T-cell (primary cell): ENCODE measurements at regions of chr11 and their contacts with region 1.

Region 1: DNA sequence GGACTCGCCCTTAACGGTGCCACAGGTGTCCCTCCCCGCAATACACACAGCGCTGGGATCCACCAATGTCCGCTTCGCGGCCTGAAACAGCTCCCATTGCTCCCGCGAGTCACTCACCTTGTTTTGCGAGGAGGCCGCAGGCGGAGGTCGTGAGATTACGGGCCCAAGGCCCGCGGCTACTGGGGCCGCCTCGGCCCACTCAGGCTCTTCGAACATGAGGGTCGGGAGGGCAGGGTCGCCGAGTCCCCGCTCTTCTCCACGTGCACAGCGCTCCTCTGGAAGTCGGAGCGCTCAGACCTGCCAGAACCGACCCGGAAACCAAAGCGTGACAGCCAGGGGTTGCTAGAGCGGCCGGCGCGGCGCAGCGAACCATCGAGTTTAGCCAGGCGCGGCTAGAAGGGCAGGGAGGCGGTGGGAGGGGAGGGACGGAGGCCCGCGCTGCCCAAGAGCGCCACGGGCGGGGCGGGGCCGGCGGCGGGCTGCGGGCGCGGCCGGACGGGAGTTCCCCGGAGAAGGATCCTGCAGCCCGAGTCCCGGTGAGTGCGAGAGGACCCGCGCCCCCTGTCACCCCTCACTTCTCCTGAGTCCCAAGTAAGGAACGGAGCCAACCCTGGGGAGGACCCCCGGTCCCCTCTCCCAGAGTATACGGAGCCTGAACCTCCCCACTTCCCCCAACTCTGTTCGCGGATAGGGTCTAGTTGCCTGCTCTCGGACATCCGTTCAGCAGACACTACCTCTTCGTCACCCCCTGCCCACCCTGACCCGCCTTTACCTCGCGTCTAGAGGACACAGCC is at the starts of genes ILK and RRP8:
- DNase-seq: peak; percentile 66 to 90 (median 74)
- ATAC-seq: peak; percentile 84 to 90 (median 88)
- H3K4me3 ChIP-seq: peak within 1 kb of the TSS; percentile 81 to 96
- H3K4me3 Mint-ChIP-seq: no peak within 1 kb of the TSS
- H3K27ac ChIP-seq: peak within 1 kb of the TSS; percentile 72
- H3K27ac Mint-ChIP-seq: no peak within 1 kb of the TSS
- H3K4me1 ChIP-seq: peaks cover 38 to 66% of the 10 kb centered on the region in 2 experiments
- H3K4me1 Mint-ChIP-seq: peaks cover 13 to 25% (median 21%) of the 10 kb centered on the region in 3 donors
- H3K27me3 ChIP-seq: no peaks in the 10 kb centered on the region
- H3K27me3 Mint-ChIP-seq: no peaks in the 10 kb centered on the region
- total RNA-seq, gene ILK: 49.3 to 111 (median 99.4) TPM
- total RNA-seq, gene RRP8: 24.5 to 35.5 (median 32.2) TPM

Region 2: DNA sequence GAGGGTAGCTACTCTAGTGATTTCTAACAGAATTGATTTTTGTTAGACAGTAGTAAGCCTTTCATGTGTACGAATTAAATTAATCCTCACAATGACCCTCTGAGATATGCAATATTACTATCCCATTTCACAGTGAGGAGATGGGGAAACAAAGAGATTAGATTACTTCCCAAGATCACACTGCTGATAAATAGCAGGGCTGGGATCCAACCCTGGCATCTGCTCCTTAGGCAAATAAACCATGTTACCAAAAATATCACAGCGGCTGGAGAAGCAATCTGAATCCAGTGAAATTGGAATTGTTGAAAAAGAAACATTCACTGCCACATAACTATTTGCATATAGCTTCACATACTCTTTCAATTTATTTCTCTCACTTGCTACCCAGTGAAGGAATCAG is 270.4 kb before region 1 on chr11:
- CTCF ChIA-PET with region 1: no interaction called
- POLR2A ChIA-PET with region 1: no interaction called
- DNase-seq: no peak
- ATAC-seq: no peak
- H3K4me3 ChIP-seq: no peak overlapping the region
- H3K4me3 Mint-ChIP-seq: no peak overlapping the region
- H3K27ac ChIP-seq: no peak overlapping the region
- H3K27ac Mint-ChIP-seq: no peak overlapping the region
- H3K4me1 ChIP-seq: no peaks in the 10 kb centered on the region
- H3K4me1 Mint-ChIP-seq: no peaks in the 10 kb centered on the region
- H3K27me3 ChIP-seq: peaks cover 6 to 10% of the 10 kb centered on the region in 2 experiments
- H3K27me3 Mint-ChIP-seq: peaks cover 8 to 12% of the 10 kb centered on the region in 2 donors

Region 3: DNA sequence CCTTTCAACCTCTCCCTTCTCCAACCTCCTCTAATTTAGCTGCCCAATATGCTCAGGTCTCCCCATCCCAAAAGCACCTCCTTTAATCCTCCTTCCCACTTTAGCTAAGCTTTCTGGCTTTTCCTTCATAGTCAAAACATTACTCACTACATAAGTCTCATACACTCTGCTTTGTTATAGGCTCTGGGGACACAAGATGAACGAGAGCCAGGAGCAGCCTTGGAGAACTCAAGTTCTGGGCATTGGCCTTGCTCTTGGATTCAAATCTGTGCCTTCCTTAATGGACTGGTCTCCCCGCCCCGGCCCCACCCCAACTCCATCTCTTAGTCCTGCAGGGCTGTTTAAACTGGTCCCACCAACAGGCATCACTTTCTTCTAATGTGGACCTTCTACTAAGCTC is 151.3 kb before region 1 on chr11:
- CTCF ChIA-PET with region 1: no interaction called
- POLR2A ChIA-PET with region 1: no interaction called
- DNase-seq: no peak
- ATAC-seq: no peak
- H3K4me3 ChIP-seq: no peak overlapping the region
- H3K4me3 Mint-ChIP-seq: no peak overlapping the region
- H3K27ac ChIP-seq: no peak overlapping the region
- H3K27ac Mint-ChIP-seq: no peak overlapping the region
- H3K4me1 ChIP-seq: no peaks in the 10 kb centered on the region
- H3K4me1 Mint-ChIP-seq: no peaks in the 10 kb centered on the region
- H3K27me3 ChIP-seq: no peaks in the 10 kb centered on the region
- H3K27me3 Mint-ChIP-seq: no peaks in the 10 kb centered on the region

Region 4: GRCh38 chr11:6579681-6580080 is 23.8 kb before region 1 on chr11:
- CTCF ChIA-PET with region 1: no interaction called
- POLR2A ChIA-PET with region 1: no interaction called
- DNase-seq: no peak
- ATAC-seq: no peak
- H3K4me3 ChIP-seq: no peak overlapping the region
- H3K4me3 Mint-ChIP-seq: no peak overlapping the region
- H3K27ac ChIP-seq: no peak overlapping the region
- H3K27ac Mint-ChIP-seq: no peak overlapping the region
- H3K4me1 ChIP-seq: no peaks in the 10 kb centered on the region
- H3K4me1 Mint-ChIP-seq: peaks cover 0 to 7% (median 0%) of the 10 kb centered on the region in 3 donors
- H3K27me3 ChIP-seq: no peaks in the 10 kb centered on the region
- H3K27me3 Mint-ChIP-seq: no peaks in the 10 kb centered on the region

Region 5: DNA sequence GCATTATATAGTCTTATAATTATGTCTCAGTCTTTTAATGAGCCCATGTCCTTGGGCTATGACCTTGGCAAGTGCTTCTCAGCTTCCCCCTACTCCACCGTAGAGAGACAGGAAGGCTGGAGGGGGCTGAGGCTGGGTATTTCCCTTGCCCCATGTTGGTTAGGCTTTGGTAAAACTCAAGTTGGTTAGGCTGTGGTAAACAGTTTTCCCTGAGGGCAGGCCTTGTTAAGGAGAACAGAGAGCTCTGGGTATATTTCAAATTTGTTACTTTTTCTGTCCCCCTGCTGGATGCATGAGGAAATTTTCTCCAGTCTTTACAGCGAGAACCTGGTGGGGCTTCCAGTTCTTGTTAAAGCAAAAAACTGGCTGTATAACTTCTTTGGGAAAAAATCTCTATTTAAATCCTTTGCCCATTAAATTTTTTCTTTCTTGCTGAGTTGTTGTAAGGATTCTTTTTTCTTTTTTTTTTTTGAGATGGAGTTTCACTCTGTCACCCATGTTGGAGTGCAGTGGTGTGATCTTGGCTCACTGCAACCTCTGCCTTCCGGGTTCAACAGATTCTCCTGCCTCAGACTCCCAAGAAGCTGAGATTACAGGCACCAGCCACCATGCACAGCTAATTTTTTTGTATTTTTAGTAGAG is 64.4 kb after region 1 on chr11:
- CTCF ChIA-PET with region 1: interaction called in 1 of 2 experiments, 13 read pairs
- POLR2A ChIA-PET with region 1: interaction called in 1 of 2 experiments, 4 read pairs
- DNase-seq: peak in 11 of 35 experiments; percentile 12 to 72 (median 26)
- ATAC-seq: peak; percentile 60 to 84 (median 68)
- H3K4me3 ChIP-seq: no peak overlapping the region
- H3K4me3 Mint-ChIP-seq: no peak overlapping the region
- H3K27ac ChIP-seq: peak overlapping the region; percentile 46
- H3K27ac Mint-ChIP-seq: peak overlapping the region; percentile 74 to 81
- H3K4me1 ChIP-seq: peaks cover 22 to 24% of the 10 kb centered on the region in 2 experiments
- H3K4me1 Mint-ChIP-seq: peaks cover 62 to 75% (median 64%) of the 10 kb centered on the region in 3 donors
- H3K27me3 ChIP-seq: no peaks in the 10 kb centered on the region
- H3K27me3 Mint-ChIP-seq: no peaks in the 10 kb centered on the region